Calu3 (cell line): ENCODE measurements at regions of chr2 and their contacts with region 1.

Region 1: DNA sequence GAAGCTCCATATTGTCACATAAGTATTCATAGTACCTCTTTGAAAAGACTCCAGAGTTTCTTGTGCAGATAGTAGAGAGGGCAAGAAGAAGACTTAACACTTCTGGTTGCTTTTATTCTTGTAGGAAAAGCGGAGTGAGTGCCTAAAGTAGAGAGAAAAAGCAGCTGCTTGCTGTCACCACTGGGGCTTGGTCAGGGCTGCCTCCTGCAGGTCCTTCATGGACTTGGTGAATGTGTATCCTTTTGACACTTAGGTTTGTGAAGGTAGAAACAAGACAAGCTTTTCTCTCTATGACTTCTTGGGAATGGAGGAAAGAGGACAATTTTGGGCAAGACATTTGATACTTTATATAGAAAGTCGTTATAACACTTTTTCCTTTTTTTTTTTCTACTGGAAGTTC is 312.8 kb upstream of the FANCL start:
- DNase-seq: peak; percentile 34
- H3K4me3 Mint-ChIP-seq: no peak overlapping the region
- H3K27ac Mint-ChIP-seq: no peak overlapping the region
- H3K4me1 Mint-ChIP-seq: no peaks in the 10 kb centered on the region
- H3K27me3 Mint-ChIP-seq: no peaks in the 10 kb centered on the region
- CTCF ChIP-seq: no peak

Region 2: DNA sequence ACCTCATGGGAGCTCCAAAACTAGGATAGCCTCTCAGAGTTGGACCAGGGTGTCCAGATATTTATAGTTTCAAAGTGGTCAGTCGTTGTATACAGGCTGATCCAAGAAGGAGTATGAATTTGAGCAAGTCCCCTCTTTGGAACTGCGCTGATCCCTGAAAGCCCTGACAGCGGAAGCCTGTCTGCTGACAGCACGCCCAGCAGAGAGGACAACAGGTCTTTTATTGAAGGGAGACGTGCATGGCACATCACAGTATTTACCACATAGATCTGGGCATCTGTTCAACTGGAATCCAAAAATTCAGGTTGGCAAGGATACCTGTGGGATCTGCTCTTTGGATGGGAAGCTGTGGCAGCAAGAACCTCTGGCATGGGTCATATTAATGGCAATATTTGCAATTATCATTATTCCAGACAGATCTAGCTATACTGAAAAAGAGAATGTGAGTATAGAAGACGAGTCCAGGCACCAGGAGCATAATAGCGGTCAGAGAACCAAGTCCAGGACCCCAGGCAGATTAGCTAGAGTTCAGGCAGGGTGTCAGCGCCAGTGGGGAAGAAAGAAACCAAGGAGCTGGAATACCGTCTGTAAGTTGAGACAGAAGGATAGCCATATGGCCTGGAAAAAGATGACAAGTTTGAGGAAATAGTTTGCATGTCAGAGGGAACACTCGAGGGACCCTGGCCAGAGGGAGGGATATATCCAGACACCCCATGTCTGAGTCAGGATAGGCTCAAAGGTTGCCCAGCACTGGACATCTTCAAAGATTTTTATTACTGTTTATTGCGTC is 52.4 kb before region 1 on chr2:
- CTCF ChIA-PET with region 1: no interaction called
- intact Hi-C with region 1: loop called (anchors 5 kb)
- DNase-seq: no peak
- H3K4me3 Mint-ChIP-seq: no peak overlapping the region
- H3K27ac Mint-ChIP-seq: no peak overlapping the region
- H3K4me1 Mint-ChIP-seq: peaks cover 53% of the 10 kb centered on the region
- H3K27me3 Mint-ChIP-seq: no peaks in the 10 kb centered on the region
- CTCF ChIP-seq: no peak

Region 3: GRCh38 chr2:58521803-58522554 is 32.0 kb before region 1 on chr2:
- CTCF ChIA-PET with region 1: no interaction called
- intact Hi-C with region 1: no loop called
- DNase-seq: no peak
- H3K4me3 Mint-ChIP-seq: no peak overlapping the region
- H3K27ac Mint-ChIP-seq: no peak overlapping the region
- H3K4me1 Mint-ChIP-seq: no peaks in the 10 kb centered on the region
- H3K27me3 Mint-ChIP-seq: no peaks in the 10 kb centered on the region
- CTCF ChIP-seq: no peak

Region 4: DNA sequence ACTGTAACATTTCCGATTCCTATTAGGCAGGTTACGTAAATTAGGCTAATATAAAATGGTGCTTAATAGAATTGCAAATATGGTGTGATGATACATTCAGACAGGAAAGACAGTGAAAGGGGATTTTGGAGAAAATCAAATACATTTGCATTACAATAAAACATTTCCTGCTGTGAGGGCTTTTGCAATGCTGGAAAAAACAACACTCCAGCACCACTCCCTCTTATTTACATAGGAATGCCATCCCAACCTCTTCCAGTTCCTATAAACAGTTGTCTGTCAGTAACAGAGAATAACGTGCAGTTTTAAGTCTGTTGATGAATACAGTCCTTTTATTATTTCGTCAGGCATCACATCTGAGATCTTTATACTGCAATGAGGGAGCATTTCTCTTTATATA is 14.0 kb before region 1 on chr2:
- CTCF ChIA-PET with region 1: no interaction called
- intact Hi-C with region 1: no loop called
- DNase-seq: no peak
- H3K4me3 Mint-ChIP-seq: no peak overlapping the region
- H3K27ac Mint-ChIP-seq: no peak overlapping the region
- H3K4me1 Mint-ChIP-seq: peaks cover 11% of the 10 kb centered on the region
- H3K27me3 Mint-ChIP-seq: no peaks in the 10 kb centered on the region
- CTCF ChIP-seq: no peak

Region 5: GRCh38 chr2:58680755-58681310 is 126.9 kb after region 1 on chr2:
- CTCF ChIA-PET with region 1: no interaction called
- intact Hi-C with region 1: no loop called
- DNase-seq: no peak
- H3K4me3 Mint-ChIP-seq: no peak overlapping the region
- H3K27ac Mint-ChIP-seq: no peak overlapping the region
- H3K4me1 Mint-ChIP-seq: peaks cover 8% of the 10 kb centered on the region
- H3K27me3 Mint-ChIP-seq: no peaks in the 10 kb centered on the region
- CTCF ChIP-seq: no peak